BJ (cell line): ENCODE measurements at regions of chr3 and their contacts with region 1.

Region 1: DNA sequence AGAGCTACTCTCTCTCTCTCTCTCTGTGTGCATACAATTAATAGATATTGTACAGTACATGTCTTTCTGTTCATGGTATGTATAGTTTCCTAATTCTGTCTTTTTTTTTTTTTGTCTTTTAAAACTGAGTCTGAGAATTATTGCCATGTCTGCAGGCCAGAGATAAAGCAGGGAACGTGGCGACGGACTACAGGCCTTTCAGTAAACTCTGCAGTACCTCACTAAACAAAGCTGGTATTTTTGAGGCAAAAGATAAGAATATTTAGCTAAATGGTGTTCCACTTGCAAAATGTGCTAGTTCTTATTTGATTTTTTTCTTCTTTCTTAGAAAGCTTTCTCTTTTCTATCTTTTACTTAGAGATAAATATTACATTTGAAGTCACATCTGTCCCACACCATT is 44.0 kb upstream of the EHHADH start:
- DNase-seq: no peak
- H3K4me3 ChIP-seq: no peak overlapping the region
- H3K27me3 ChIP-seq: no peaks in the 10 kb centered on the region
- CTCF ChIP-seq: no peak

Region 2: DNA sequence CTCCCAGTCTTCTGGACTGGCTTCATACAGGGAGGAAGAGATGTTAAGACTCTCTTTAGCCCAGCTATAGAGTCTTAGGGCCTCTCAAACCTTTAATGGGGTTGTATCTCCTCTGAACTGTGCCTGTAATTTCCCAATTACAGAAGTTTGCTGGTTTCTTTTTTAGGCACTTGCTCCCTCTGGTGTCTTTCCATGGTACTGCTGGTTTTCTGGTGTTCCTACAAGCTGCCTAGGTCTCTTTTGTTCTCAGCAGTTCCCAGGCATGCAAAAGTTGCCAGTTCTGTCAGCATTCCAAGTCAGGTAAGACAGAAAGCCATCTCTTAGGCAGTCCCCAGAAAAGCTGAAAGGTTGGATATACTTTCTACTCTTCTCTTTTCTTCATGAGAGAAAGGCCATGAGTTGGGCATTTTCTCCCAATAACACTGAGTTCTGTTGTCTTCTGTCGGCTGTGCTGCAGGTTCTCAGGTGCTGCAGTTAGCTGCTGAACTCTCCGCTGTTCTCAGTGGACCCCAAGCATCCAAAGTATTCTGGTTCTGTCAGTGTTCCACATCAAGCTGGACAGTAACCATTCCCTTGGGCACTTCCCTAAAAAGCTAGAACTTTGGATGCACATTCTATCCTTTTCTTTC is 10.4 kb after region 1 on chr3:
- CTCF ChIA-PET with region 1: interaction called, 17 read pairs
- POLR2A ChIA-PET with region 1: interaction called, 3 read pairs
- DNase-seq: no peak
- H3K4me3 ChIP-seq: no peak overlapping the region
- H3K27me3 ChIP-seq: no peaks in the 10 kb centered on the region
- CTCF ChIP-seq: peak; percentile 89